ENCODE measurements at regions of chr6 and their contacts with region 1.

Region 1: DNA sequence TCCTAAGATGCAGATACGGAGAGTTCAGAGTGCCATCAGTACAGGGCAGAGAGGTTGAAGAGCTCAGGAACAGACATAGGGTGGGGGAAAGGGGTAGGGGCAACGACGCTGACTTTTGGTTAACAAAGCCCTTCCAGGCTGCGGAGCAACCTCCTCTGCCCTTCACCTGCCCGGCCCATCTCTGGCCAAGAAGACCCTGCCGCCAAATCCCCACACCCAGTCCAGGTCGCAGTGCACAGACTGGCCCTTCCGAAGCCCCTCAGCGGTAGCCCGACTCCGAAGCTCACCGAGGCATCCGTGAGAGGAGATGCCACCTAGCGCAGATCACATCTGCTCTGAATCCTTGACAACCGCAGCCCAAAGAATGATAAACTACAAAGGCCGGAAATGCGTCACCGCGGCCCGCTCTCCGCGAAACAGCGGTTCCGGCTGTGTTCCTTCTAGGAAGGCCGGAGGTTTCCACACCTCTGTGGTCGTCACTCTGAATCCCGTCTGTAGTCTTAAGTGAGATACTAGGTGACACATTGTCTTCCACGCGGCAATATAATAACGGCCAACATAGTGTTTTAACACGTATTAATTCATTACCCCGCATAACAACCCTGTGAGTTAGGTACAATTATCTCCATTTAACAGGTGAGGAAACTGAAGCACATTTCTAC is at the start of gene ZSCAN23:
- DNase-seq: peak; percentile 77
- H3K4me3 Mint-ChIP-seq: peak within 1 kb of the TSS; percentile 87
- H3K27ac Mint-ChIP-seq: peak within 1 kb of the TSS; percentile 44
- H3K4me1 Mint-ChIP-seq: peaks cover 25% of the 10 kb centered on the region
- H3K27me3 Mint-ChIP-seq: peaks cover 34% of the 10 kb centered on the region
- total RNA-seq, gene ZSCAN23: 0.48 and 0.50 TPM in 2 replicates

Region 2: DNA sequence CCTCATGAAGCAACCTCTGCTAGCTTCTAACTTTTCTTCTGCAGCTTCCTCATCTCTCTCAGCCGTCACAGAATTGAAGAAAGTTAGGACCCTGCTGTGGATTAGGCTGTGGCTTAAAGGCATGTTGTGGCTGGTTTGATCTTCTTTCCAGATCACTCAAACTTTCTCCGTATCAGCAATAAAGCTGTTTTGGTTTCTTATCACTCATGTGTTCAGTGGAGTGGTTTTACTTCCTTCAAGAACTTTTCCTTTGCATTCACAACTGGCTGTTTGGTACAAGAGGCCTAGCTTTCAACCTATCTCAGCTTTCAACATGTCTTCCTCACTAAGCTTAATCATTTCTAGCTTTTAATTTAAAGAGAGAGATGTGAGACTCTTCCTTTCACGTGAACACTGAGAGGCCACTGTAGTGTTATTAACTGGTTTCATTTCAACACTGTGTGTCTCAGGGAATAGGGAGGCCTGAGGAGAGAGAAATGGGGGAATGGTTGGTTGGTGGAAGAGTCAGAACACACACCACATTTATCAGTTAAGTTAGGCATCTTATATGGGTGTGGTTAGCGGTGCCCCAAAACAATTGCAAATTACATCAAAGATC is 17.2 kb before region 1 on chr6:
- intact Hi-C with region 1: loop called (anchors 1 kb)
- DNase-seq: no peak
- H3K4me3 Mint-ChIP-seq: no peak overlapping the region
- H3K27ac Mint-ChIP-seq: peak overlapping the region; percentile 13
- H3K4me1 Mint-ChIP-seq: peaks cover 25% of the 10 kb centered on the region
- H3K27me3 Mint-ChIP-seq: peaks cover 53% of the 10 kb centered on the region

Measured in activated T-helper 2 cell treated with anti-CD3 and anti-CD28 coated beads, Interferon-gamma antibody, Interleukin-2, Interleukin-4, amounts not matched to agents 10 μg/mL and 5 μg/mL and 100 μg/mL, durations not matched to agents 14 hours and 24 hours and 36 hours (primary cell).